ENCODE measurements at regions of chr1 and their contacts with region 1.

Region 1: DNA sequence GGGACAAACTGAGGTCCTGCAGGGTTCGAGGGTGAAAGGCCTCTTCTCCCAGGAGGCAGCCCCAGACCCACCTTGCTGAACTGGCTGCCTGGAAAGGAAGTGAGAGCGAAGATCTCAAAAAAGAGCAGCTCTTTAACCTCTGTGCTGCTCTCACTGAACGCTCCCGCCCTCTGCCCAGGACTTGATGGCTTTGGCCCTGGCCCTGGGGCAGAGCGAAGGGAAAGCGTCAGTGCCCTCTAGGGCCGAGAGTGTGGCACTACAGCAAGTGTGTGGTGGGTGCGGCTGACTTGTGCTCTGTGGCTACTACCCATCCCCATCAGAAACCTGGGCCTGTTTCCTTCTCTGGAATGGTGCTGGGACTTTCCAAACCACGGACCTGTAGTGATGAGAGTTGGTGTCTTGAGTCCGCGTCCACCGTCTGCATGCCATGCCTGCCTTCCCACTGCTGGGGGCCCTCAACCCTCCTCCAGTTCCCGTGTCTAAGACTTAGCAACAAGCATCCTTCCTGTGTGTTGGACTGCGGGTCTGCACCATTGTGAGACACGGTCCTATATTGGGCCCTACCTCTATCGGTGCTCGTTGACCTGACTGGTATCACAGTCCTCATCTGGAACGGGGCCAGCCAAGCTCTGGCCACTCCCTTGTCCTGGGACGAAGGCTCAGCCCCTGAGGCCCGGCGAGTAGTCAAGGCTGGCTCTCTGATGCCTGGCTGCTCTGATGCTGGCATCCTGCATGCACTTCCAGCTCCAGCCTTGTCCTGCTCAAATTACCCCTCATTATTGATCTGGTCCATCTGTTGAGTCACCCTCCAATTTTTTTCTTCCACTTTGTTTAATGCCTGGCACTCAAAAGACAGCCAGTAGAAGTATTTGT is 180.3 kb downstream of the DISC1 start:
- DNase-seq: peak; percentile 50
- H3K4me3 ChIP-seq: no peak overlapping the region
- H3K27ac ChIP-seq: no peak overlapping the region
- H3K4me1 ChIP-seq: peaks cover 9% of the 10 kb centered on the region
- H3K27me3 ChIP-seq: no peaks in the 10 kb centered on the region
- CTCF ChIP-seq: peak; percentile 74 to 86
- POLR2A ChIP-seq: no peak

Region 2: GRCh38 chr1:231219422-231220401 is 587.1 kb before region 1 on chr1:
- CTCF ChIA-PET with region 1: no interaction called
- POLR2A ChIA-PET with region 1: no interaction called
- dilution Hi-C with region 1: no loop called
- intact Hi-C with region 1: no loop called
- DNase-seq: no peak
- H3K4me3 ChIP-seq: no peak overlapping the region
- H3K27ac ChIP-seq: no peak overlapping the region
- H3K4me1 ChIP-seq: no peaks in the 10 kb centered on the region
- H3K27me3 ChIP-seq: peaks cover 3 to 6% of the 10 kb centered on the region in 2 experiments
- CTCF ChIP-seq: no peak
- POLR2A ChIP-seq: no peak

Region 3: DNA sequence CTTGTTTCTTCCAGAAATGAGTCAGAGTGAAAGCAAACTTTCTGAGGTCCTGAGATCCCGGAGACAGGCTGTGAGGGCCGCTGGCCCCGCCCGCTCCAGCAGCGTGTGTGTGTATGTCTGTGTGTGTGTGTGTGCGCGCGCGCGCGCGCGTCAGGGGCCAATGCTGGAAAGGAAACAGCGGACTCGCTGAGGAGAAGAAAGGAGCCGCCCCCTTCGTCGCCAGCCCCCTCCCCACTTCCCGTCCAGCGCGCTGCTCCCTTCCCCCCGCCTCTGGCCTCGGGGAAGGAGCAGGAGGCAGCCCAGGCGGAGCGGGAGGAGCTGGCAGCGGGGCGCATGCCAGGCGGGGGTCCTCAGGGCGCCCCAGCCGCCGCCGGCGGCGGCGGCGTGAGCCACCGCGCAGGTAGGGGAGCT is 180.3 kb before region 1 on chr1 and contains the start of gene DISC1:
- CTCF ChIA-PET with region 1: no interaction called
- POLR2A ChIA-PET with region 1: no interaction called
- dilution Hi-C with region 1: no loop called
- intact Hi-C with region 1: loop called (anchors 1 kb)
- DNase-seq: peak; percentile 97
- H3K4me3 ChIP-seq: peak within 1 kb of the TSS; percentile 55 to 95 (median 71)
- H3K27ac ChIP-seq: peak within 1 kb of the TSS; percentile 40
- H3K4me1 ChIP-seq: peaks cover 14% of the 10 kb centered on the region
- H3K27me3 ChIP-seq: peaks cover 8 to 9% of the 10 kb centered on the region in 2 experiments
- CTCF ChIP-seq: no peak
- POLR2A ChIP-seq: peak; percentile 63
- total RNA-seq, gene DISC1: 12.8 and 14.7 TPM in 2 replicates

Region 4: DNA sequence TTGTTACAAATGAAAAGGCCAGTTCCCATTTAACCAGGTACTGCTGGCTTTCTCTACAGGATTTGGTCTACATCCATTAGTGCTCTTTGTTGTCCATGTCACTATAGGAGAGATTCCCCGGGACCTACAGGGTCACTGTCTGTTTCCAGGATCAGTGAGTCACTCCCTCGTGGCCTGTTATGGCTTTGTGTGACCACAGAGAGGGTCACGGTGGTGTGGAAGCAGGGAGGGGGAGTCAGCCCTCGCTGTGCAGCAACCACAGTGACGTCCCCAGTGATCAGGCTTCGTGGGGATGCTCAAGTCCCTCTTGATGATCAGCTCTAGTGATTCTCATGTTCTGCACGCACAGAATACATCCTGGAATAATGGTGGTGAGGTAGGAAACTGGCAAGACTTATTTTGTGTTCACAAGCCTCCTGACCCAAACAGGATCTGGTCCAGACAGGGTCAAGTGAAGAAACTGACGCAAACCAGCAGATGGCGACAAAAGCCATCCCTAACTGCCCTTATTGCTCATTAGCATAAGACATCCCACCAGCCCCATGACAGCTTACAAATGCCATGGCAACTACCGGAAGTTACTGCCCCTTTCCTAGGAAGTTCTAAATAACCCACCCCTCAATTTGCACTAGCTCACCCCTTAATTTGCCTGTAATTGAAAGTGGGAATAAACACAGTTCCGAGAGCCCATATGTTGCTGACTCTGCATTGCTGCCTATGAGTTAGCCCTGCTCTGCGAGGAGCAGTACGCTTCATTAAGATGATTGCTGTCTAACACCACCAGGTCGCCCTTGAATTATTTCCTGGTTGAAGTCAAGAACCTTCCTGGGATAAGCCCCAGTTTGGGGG is 81.8 kb before region 1 on chr1:
- CTCF ChIA-PET with region 1: no interaction called
- POLR2A ChIA-PET with region 1: no interaction called
- dilution Hi-C with region 1: no loop called
- intact Hi-C with region 1: loop called (anchors 1 kb)
- DNase-seq: peak; percentile 58
- H3K4me3 ChIP-seq: no peak overlapping the region
- H3K27ac ChIP-seq: no peak overlapping the region
- H3K4me1 ChIP-seq: no peaks in the 10 kb centered on the region
- H3K27me3 ChIP-seq: no peaks in the 10 kb centered on the region
- CTCF ChIP-seq: peak; percentile 54 to 56
- POLR2A ChIP-seq: no peak

Region 5: DNA sequence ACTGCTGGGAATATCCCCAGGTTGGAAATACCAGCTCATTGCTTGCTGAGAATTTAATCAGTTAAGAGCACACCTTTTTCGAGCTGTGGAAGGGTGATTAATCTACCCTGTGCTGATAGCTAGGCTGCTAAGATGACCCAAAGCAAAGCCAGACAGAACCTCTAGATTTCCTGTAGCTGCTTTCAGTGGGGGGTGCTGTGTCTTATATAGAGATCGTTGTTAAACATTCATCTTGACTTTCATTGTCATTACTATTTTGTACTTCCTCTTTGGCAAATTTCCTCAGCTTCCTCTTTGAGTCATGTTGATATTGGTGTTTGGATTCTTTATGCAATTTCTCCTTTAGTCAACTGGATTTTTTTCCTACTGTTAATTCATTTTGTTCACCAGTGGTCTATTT is 25.0 kb before region 1 on chr1:
- CTCF ChIA-PET with region 1: interaction called, 17 read pairs
- POLR2A ChIA-PET with region 1: no interaction called
- dilution Hi-C with region 1: no loop called
- intact Hi-C with region 1: no loop called
- DNase-seq: peak; percentile 88
- H3K4me3 ChIP-seq: peak overlapping the region in 1 of 3 experiments; percentile 23
- H3K27ac ChIP-seq: peak overlapping the region; percentile 67
- H3K4me1 ChIP-seq: peaks cover 13% of the 10 kb centered on the region
- H3K27me3 ChIP-seq: no peaks in the 10 kb centered on the region
- CTCF ChIP-seq: no peak
- POLR2A ChIP-seq: no peak

Measured in endothelial cell of umbilical vein (primary cell).